ENCODE measurements at regions of chr22 and their contacts with region 1.

Region 1: GRCh38 chr22:43109921-43110443 is 568 bp upstream of the BIK start:
- DNase-seq: no peak

Region 2: DNA sequence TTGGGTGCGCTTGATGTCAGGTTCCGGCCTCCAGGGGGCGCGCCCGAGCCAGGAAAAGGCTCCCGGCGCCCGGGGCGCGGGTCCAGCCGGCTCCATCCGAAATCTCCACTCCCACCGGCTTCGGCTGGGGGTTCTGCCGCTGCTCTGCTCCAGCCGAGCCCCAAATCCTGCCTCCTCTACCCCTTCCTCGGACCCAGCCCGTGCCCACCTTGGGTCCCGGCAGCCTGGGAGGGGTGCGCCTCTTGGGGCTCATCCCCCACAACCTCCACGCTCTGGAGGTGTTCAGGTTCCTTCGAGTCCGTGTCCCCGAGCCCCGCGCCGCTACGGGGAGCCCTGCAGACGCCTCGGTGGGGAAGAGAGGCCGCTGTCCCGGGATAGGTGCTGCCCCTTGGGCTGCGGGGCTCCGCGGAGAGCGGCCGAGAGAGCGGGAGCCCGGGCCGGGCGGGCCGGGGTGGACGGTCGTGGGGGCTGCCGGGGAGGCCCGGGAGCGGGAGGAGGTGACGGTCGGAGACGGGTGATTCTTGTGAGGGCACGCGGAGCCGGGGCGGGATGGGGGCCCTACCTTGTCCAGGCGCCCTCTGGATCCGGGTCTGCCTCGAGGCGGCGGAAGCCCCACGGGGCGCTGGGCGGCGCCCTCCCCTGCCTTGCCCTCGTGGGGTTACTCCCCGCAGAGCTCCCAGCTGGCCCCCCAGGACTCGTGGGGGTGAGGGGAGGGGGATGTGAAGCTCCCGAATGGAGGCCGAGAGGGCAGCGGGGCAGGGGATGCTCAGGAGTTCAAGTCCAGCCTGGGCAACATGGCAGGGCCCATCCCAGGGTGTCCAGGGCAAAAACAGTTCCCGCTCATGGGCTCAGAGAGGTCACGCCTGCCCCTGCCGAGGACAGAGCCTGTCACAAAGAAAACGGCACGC is 447.6 kb before region 1 on chr22:
- in situ Hi-C with region 1: loop called (anchors 10 kb)
- DNase-seq: peak; percentile 75

Region 3: DNA sequence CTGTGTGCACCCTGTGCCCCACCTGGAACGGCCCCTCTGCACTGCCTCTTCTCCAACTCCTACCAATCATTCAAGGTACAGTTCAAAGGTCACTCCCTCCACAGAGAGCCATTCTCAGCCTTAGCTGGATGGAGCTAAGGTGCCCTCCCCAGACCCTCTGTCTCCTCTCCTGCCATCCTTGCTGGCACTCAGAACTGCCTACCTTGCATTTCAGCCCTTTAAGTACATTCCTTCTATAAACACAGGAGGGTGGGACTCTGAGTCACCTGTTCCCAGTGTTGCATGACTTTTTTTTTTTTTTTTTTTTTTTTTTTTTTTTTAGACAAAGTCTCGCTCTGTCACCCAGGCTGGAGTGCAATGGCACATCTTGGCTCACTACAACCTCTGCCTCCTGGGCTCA is 29.4 kb before region 1 on chr22:
- in situ Hi-C with region 1: no loop called
- DNase-seq: no peak